AG04449 (cell line): ENCODE measurements at regions of chr2 and their contacts with region 1.

Region 1: GRCh38 chr2:97806738-97807618 is 93.6 kb downstream of the ZAP70 start:
- DNase-seq: peak; percentile 4
- H3K4me3 ChIP-seq: no peak overlapping the region
- CTCF ChIP-seq: peak; percentile 95

Region 2: GRCh38 chr2:97788986-97789644 is 17.9 kb before region 1 on chr2:
- CTCF ChIA-PET with region 1: interaction called, 16 read pairs
- POLR2A ChIA-PET with region 1: no interaction called
- DNase-seq: no peak
- H3K4me3 ChIP-seq: no peak overlapping the region
- CTCF ChIP-seq: no peak

Region 3: GRCh38 chr2:97796465-97797126 is 10.4 kb before region 1 on chr2:
- CTCF ChIA-PET with region 1: interaction called, 16 read pairs
- POLR2A ChIA-PET with region 1: no interaction called
- DNase-seq: no peak
- H3K4me3 ChIP-seq: no peak overlapping the region
- CTCF ChIP-seq: no peak

Region 4: DNA sequence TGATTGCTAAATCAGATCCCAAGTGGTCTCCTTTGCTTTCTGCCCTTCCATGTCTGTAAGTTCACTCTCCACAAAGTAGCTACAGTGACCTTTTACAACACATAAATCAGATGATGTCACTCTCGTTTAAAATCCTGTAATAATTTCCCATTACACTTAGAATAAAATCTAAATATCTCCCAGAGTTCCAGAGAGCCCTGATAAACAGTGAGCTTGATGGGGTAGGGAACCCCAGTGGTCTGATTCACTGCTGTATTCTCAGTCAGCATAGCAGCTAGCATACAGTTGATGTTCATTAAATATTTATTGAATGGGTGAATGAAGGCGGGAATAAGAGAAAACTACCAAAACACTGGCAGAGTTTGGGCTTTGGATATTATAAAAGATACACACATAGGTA is 24.1 kb after region 1 on chr2:
- CTCF ChIA-PET with region 1: interaction called, 11 read pairs
- POLR2A ChIA-PET with region 1: no interaction called
- DNase-seq: no peak
- H3K4me3 ChIP-seq: no peak overlapping the region
- CTCF ChIP-seq: no peak

Region 5: DNA sequence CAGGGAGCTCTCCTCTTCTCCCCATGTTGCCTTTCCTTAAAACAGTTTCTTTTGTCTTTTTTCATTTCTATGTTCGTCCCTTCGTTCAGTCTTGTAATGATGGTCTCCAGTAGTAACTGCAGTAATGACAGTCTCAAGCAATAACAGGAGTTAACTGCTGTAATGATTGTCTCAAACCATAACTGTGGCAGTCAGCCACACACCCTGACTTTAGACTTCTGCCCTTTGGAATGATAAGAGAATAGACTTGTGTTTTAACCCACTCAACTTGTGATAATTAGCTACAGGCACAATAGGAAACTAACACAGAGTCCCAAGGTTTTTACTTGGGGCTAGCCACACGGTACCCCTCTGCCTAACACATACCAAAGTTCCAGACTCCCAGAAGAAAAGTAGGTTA is 176.7 kb after region 1 on chr2:
- CTCF ChIA-PET with region 1: interaction called, 10 read pairs
- POLR2A ChIA-PET with region 1: no interaction called
- DNase-seq: no peak
- H3K4me3 ChIP-seq: no peak overlapping the region
- CTCF ChIP-seq: no peak

Region 6: GRCh38 chr2:98269274-98269673 is 462.3 kb after region 1 on chr2:
- CTCF ChIA-PET with region 1: interaction called, 29 read pairs
- POLR2A ChIA-PET with region 1: no interaction called
- DNase-seq: peak; percentile 3
- H3K4me3 ChIP-seq: no peak overlapping the region
- CTCF ChIP-seq: peak; percentile 60

Region 7: DNA sequence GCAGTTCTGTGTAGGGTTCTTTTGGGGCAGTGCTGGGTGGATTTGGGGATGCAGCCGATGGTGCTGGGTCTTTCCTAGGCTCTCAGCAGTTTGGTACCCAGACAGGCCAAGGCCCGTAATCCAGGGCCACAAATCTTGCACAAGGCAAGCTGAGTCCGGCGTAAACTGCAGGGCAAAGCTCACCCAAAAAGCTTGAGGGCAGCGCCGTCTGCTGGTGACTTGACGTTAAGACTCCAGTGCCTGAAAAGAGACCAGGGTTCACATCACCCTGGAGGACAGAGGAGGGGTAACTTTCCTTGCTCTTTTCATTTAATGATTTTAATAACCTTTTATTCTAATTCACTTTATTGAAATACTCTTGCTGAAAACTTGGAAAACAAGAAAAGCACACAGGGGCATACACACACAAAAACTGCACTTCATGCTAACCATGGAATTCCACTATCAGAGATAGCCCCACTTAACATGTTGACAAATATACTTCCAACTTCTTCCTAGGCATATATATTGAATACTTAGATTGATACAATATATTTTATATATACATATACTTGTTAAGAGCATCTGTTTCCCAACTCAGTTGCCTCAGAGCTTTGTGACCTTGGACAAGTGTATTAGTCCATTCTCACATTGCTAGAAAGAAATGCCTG is 578.2 kb after region 1 on chr2:
- CTCF ChIA-PET with region 1: interaction called, 38 read pairs
- POLR2A ChIA-PET with region 1: no interaction called
- DNase-seq: no peak
- H3K4me3 ChIP-seq: no peak overlapping the region
- CTCF ChIP-seq: peak; percentile 97